ENCODE measurements at regions of chr6 and their contacts with region 1.

Region 1: GRCh38 chr6:43506667-43507471 is 3.3 kb downstream of the LRRC73 start:
- DNase-seq: peak; percentile 83
- H3K4me3 ChIP-seq: no peak overlapping the region
- H3K27ac ChIP-seq: no peak overlapping the region
- H3K4me1 ChIP-seq: no peaks in the 10 kb centered on the region
- H3K27me3 ChIP-seq: no peaks in the 10 kb centered on the region
- CTCF ChIP-seq: peak; percentile 94

Region 2: GRCh38 chr6:41917528-41917927 is 1589.3 kb before region 1 on chr6:
- CTCF ChIA-PET with region 1: no interaction called
- POLR2A ChIA-PET with region 1: no interaction called
- intact Hi-C with region 1: no loop called
- DNase-seq: peak; percentile 42
- H3K4me3 ChIP-seq: no peak overlapping the region
- H3K27ac ChIP-seq: peak overlapping the region; percentile 29
- H3K4me1 ChIP-seq: peaks cover 2% of the 10 kb centered on the region
- H3K27me3 ChIP-seq: no peaks in the 10 kb centered on the region
- CTCF ChIP-seq: no peak

Region 3: DNA sequence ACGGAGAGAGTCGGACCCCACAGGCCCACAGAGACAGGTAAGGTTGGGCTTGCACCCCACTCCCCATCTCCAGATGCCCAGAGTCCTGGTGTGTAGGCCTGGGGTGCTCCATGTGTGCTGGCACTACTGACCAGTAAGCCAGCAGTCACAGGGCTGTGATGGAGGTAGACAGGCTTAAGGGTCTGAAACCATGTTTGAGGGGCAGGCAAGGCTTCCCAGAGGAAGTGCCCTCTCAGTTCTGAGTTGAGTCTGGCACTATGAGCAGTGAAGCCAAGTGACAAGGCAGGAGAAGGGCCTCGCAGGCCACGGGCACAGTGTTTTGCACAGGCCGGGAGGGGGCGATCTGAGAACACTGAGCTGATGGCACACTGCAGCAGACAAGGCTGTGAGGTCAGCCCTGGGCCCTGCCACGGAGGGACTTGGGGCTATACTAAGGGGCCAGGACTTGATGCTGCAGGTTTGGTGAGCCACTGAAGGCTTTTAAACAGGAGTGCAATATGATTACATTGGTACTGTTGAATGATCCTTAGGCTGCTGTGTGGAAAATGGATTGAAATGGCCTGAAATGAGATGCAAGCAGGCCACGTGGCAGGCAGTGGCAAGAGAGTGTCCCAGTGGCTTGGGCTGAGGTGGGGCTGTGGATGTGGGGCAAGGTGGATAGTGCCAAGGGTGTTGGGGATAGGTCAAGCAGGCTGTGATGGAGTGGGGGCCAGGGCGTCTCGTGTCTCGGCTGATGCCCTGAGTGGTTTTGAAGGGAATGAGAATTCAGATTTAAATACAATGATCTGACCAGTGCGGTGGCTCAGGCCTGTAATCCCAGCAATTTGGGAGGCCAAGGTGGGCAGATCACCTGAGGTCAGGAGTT is 243.3 kb before region 1 on chr6:
- CTCF ChIA-PET with region 1: no interaction called
- POLR2A ChIA-PET with region 1: no interaction called
- intact Hi-C with region 1: loop called (anchors 10 kb)
- DNase-seq: peak; percentile 75
- H3K4me3 ChIP-seq: no peak overlapping the region
- H3K27ac ChIP-seq: no peak overlapping the region
- H3K4me1 ChIP-seq: no peaks in the 10 kb centered on the region
- H3K27me3 ChIP-seq: no peaks in the 10 kb centered on the region
- CTCF ChIP-seq: peak; percentile 80

Region 4: GRCh38 chr6:43386492-43386891 is 120.4 kb before region 1 on chr6:
- CTCF ChIA-PET with region 1: interaction called, 6 read pairs
- POLR2A ChIA-PET with region 1: no interaction called
- intact Hi-C with region 1: loop called (anchors 2 kb)
- DNase-seq: peak; percentile 66
- H3K4me3 ChIP-seq: no peak overlapping the region
- H3K27ac ChIP-seq: no peak overlapping the region
- H3K4me1 ChIP-seq: peaks cover 9% of the 10 kb centered on the region
- H3K27me3 ChIP-seq: no peaks in the 10 kb centered on the region
- CTCF ChIP-seq: peak; percentile 74

Region 5: GRCh38 chr6:43454696-43455530 is 52.0 kb before region 1 on chr6:
- CTCF ChIA-PET with region 1: interaction called, 10 read pairs
- POLR2A ChIA-PET with region 1: interaction called, 14 read pairs
- intact Hi-C with region 1: loop called (anchors 1 kb)
- DNase-seq: peak; percentile 36
- H3K4me3 ChIP-seq: peak overlapping the region; percentile 47
- H3K27ac ChIP-seq: no peak overlapping the region
- H3K4me1 ChIP-seq: peaks cover 10% of the 10 kb centered on the region
- H3K27me3 ChIP-seq: no peaks in the 10 kb centered on the region
- CTCF ChIP-seq: peak; percentile 38

Region 6: GRCh38 chr6:43532201-43532600 is 25.3 kb after region 1 on chr6:
- CTCF ChIA-PET with region 1: no interaction called
- POLR2A ChIA-PET with region 1: no interaction called
- intact Hi-C with region 1: no loop called
- DNase-seq: no peak
- H3K4me3 ChIP-seq: no peak overlapping the region
- H3K27ac ChIP-seq: no peak overlapping the region
- H3K4me1 ChIP-seq: no peaks in the 10 kb centered on the region
- H3K27me3 ChIP-seq: no peaks in the 10 kb centered on the region
- CTCF ChIP-seq: no peak

Measured in A673 (cell line).